Activated T-helper 2 cell treated with anti-CD3 and anti-CD28 coated beads, Interferon-gamma antibody, Interleukin-2, Interleukin-4, amounts not matched to agents 10 μg/mL and 5 μg/mL and 100 μg/mL, durations not matched to agents 14 hours and 24 hours and 36 hours (primary cell): ENCODE measurements at regions of chr12 and their contacts with region 1.

Region 1: GRCh38 chr12:108731105-108731865 is at the start of gene CORO1C:
- DNase-seq: peak; percentile 96
- H3K4me3 Mint-ChIP-seq: peak within 1 kb of the TSS; percentile 87
- H3K27ac Mint-ChIP-seq: peak within 1 kb of the TSS; percentile 87
- H3K4me1 Mint-ChIP-seq: peaks cover 42% of the 10 kb centered on the region
- H3K27me3 Mint-ChIP-seq: peaks cover 4% of the 10 kb centered on the region
- total RNA-seq, gene CORO1C: 81.5 and 88.8 TPM in 2 replicates

Region 2: DNA sequence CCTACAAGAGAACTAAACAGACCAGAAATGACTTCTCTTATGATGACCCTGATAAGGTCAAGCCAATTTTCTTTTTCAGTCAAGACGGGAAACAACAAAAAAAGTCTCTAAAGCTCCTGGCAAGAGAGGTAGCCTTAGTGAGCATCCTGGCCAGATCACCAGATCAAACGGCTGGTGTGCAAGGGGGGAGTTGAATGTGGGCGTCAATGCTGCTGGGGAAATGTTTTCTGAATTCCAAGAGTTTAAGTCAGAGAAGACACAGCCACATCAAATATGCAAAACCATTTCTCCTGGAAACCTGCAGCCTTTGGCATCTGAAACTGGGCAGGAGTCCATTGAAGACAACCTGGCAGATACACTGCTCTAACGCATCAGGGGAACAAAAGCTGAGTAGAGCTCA is 81.6 kb before region 1 on chr12:
- intact Hi-C with region 1: loop called (anchors 5 kb)
- DNase-seq: no peak
- H3K4me3 Mint-ChIP-seq: no peak overlapping the region
- H3K27ac Mint-ChIP-seq: peak overlapping the region; percentile 73
- H3K4me1 Mint-ChIP-seq: peaks cover 49% of the 10 kb centered on the region
- H3K27me3 Mint-ChIP-seq: no peaks in the 10 kb centered on the region

Region 3: DNA sequence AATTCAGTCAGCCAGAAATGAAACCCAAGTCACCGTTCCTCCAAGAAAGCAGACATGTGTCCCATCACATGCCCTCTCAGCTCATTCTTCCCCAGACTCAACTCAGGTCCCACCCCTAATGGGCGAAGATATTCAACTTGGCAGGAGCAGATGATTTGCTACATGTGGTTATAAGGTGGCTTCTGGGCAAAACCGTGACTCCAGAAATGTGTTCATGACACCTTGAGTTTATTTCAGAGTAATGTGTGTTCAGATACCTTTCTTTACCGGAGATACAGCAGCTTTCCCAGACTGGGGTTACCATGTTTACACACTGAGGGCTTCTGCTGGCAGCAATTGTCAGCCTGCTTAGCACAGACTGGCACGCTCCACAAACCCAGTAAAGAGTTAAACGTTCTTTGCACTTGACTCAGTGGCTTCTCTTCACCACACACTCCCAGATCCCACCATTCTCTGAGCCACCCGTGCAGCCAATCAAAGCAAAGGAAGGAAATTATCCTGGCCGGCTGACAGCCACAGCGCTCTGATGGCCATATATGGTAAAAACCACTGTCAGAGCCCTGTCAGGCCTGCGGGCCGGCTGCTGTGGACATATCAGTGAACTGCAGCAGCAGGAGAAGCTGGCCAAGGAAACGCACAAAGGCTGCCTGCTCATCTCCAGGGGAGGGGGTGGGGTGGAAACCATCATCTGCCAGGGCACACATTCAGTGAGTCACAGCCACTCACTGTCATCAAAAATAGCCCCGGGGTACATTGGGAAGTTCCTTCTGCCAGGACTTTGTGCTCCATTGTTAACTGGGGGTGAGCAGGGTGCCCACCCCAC is 39.9 kb before region 1 on chr12:
- intact Hi-C with region 1: loop called (anchors 1 kb)
- DNase-seq: peak; percentile 55
- H3K4me3 Mint-ChIP-seq: peak overlapping the region; percentile 62
- H3K27ac Mint-ChIP-seq: peak overlapping the region; percentile 99
- H3K4me1 Mint-ChIP-seq: peaks cover 64% of the 10 kb centered on the region
- H3K27me3 Mint-ChIP-seq: no peaks in the 10 kb centered on the region

Region 4: GRCh38 chr12:108856428-108857157 is 125.3 kb after region 1 on chr12:
- intact Hi-C with region 1: loop called (anchors 2 kb)
- DNase-seq: peak; percentile 40
- H3K4me3 Mint-ChIP-seq: peak overlapping the region; percentile 83
- H3K27ac Mint-ChIP-seq: peak overlapping the region; percentile 84
- H3K4me1 Mint-ChIP-seq: peaks cover 56% of the 10 kb centered on the region
- H3K27me3 Mint-ChIP-seq: no peaks in the 10 kb centered on the region